ENCODE measurements at regions of chr22 and their contacts with region 1.

Region 1: GRCh38 chr22:43230971-43231723 is 44.2 kb upstream of the TTLL12 start:
- DNase-seq: no peak
- H3K4me3 ChIP-seq: no peak overlapping the region
- CTCF ChIP-seq: peak; percentile 92

Region 2: DNA sequence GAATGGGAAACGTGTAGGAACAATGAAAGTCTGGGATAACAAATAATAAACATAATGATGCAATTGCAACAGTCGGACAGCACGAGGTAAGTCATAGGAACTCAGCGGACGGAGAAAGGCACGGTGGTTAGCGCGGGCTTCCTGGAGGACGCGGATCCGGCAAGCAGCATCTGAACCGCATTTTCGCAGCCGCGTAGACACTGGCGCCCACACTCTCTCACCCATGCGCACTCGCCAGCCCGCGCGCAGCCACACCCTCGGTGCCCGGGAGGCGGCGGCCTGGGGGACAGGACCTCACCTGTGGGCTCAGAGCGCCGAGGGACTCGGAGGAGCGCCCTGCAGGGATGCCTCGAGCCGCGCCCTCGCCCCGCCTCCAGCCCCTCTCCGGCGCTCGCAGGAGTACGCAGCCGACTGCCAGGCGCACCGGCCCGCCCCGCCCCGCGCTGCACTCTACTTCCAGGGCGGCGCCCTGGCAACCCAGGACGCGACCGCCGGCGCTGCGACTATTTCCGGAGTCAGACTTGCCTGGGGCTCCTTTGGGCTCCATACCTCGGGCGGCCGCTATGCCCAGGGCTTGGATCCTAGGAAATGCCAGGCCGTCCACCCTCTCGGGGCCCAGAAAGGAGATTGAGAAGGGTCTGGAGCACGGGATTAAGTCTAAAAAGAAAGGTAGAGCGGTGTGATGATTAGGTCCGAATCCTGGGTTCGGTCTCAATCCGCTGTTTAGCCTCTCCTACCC is 142.0 kb before region 1 on chr22 and contains the start of gene TTLL1:
- CTCF ChIA-PET with region 1: no interaction called
- POLR2A ChIA-PET with region 1: no interaction called
- DNase-seq: no peak
- H3K4me3 ChIP-seq: peak within 1 kb of the TSS; percentile 89
- CTCF ChIP-seq: no peak

Region 3: GRCh38 chr22:43257549-43257948 is 26.4 kb after region 1 on chr22:
- CTCF ChIA-PET with region 1: interaction called, 11 read pairs
- POLR2A ChIA-PET with region 1: no interaction called
- DNase-seq: no peak
- H3K4me3 ChIP-seq: no peak overlapping the region
- CTCF ChIP-seq: no peak

Region 4: GRCh38 chr22:43421046-43421665 is 190.0 kb after region 1 on chr22:
- CTCF ChIA-PET with region 1: no interaction called
- POLR2A ChIA-PET with region 1: no interaction called
- DNase-seq: no peak
- H3K4me3 ChIP-seq: no peak overlapping the region
- CTCF ChIP-seq: no peak

Measured in AG04449 (cell line).